Heart left ventricle (tissue), 16 donors: ENCODE measurements at regions of chr12 and their contacts with region 1.

Region 1: DNA sequence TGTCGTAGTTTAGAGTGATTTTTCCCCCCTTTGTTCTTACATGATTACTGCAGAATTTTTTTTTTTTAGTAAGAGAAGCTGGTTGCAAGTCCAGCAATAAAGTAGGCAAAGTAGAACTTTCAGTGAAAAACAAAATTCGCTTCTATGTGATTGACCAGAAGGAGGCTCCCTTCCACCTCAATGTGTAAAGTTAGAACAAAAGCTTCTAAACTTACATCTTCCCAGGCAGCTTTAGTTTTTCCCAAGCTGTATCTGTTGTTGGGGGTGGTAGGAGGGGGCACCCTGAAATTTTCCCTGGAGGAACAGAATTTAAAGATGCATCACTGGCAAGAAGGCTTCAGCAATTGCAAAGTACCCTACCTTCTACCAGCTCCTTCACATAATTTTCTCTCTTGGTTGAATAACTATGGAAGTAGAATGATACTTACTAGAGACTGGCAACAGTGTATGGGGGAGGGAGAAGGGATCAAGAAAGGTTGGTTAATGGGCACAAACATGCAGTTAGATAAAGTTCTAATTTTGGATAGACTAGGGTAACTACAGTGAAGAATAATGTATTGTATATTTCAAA is 87.3 kb upstream of the E2F7 start:
- DNase-seq: no peak
- ATAC-seq: no peak
- H3K4me3 ChIP-seq: no peak overlapping the region
- H3K27ac ChIP-seq: no peak overlapping the region
- H3K4me1 ChIP-seq: no peaks in the 10 kb centered on the region
- H3K27me3 ChIP-seq: no peaks in the 10 kb centered on the region
- CTCF ChIP-seq: peak; percentile 15 to 68 (median 56)
- POLR2A ChIP-seq: no peak

Region 2: GRCh38 chr12:77679686-77680085 is 527.0 kb after region 1 on chr12:
- intact Hi-C with region 1: loop called in 8 of 10 experiments (anchors 2 to 5 kb)
- DNase-seq: no peak
- ATAC-seq: no peak
- H3K4me3 ChIP-seq: no peak overlapping the region
- H3K27ac ChIP-seq: no peak overlapping the region
- H3K4me1 ChIP-seq: peaks cover 0 to 2% (median 0%) of the 10 kb centered on the region in 12 donors
- H3K27me3 ChIP-seq: no peaks in the 10 kb centered on the region
- CTCF ChIP-seq: no peak
- POLR2A ChIP-seq: no peak

Region 3: DNA sequence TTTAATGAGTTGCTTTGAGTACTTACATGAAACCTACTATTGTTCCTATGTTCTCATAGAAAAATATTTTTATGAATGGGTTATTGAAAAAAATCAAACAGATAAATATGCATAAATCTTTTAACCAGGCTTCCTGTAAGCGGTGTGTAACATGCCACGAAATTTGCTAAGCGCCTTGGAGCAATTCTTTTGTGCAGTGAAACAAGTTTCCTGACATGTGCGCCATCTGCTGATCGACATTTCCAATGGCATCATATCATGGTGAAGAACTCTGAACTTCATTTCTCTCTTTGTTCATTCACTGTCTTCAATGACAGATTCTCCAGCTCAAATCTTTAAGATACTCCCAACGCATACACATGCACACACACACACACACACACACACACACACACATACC is 532.4 kb after region 1 on chr12:
- intact Hi-C with region 1: loop called (anchors 1 to 5 kb)
- DNase-seq: peak; percentile 33 to 55 (median 50)
- ATAC-seq: peak; percentile 58 to 82 (median 72)
- H3K4me3 ChIP-seq: peak overlapping the region in 6 of 12 donors; percentile 1 to 22 (median 11)
- H3K27ac ChIP-seq: no peak overlapping the region
- H3K4me1 ChIP-seq: peaks cover 0 to 6% (median 0%) of the 10 kb centered on the region in 12 donors
- H3K27me3 ChIP-seq: no peaks in the 10 kb centered on the region
- CTCF ChIP-seq: peak in 11 of 12 donors; percentile 33 to 70 (median 54)
- POLR2A ChIP-seq: no peak

Region 4: DNA sequence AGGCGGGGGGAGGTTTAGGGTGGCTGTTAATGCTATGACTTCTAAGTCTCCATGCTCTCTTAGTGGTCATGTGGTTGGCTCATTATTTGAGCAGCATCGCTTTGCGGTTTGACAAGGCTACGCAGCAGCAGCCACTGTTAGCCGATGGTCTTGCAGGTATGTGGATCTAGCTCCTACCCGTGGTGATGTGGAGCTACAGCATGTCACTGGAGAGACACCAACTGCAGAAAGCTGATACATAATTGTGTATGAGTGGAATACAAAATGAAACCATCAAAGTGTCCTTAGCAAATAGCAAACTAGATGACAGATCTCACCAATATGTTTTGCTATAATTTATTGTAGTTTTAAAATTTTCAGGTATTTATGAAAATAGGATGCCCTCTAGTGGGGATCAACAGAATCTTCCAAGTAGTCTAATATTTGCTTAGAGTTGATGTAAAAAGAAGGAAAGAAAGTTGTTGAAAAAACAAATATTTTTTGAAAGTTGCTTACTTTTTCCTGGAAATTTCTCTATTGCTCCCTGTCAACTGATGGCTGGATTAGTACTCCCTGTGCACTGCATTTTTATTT is 772.9 kb after region 1 on chr12:
- intact Hi-C with region 1: loop called in 2 of 10 experiments (anchors 5 to 10 kb)
- DNase-seq: peak; percentile 62 to 78 (median 73)
- ATAC-seq: peak; percentile 85 to 98 (median 92)
- H3K4me3 ChIP-seq: peak overlapping the region in 5 of 12 donors; percentile 2 to 27 (median 13)
- H3K27ac ChIP-seq: no peak overlapping the region
- H3K4me1 ChIP-seq: peaks cover 0 to 8% (median 0%) of the 10 kb centered on the region in 12 donors
- H3K27me3 ChIP-seq: no peaks in the 10 kb centered on the region
- CTCF ChIP-seq: peak; percentile 80 to 98 (median 94)
- POLR2A ChIP-seq: no peak